A549 (cell line): ENCODE measurements at regions of chr9 and their contacts with region 1.

Region 1: DNA sequence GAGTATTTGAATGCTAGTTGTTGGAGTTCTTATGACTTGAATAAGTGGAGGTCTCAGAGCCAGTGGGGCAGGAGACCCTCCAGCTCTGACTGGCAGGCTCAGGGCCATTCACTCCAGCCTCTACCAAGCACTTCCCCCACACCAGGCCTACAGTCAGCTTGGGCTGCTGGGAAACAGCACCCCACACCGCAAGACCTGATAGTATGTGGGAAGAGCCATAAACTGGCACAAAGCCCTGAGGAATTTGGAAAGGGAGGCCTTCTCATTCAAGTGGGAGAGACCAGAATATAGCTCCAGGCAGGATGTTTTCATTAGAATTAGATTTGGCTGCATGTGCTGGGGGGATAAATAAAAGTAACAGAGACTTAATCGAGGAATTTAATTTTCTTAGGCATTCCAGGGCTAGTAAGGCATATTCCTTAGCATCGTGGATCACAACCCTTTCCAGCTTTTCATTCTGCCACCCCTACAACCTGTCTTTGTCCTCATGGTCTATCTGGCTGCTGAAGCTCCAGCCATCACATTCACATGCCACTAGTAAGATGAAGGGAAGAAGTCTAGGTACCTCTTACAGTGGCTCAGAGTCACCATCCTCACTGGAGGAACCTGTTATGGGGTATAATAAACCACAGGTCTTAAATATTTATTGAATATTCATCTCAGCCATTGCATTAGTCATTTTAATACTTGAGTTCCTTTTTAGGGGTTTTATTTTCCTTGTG is 47.5 kb downstream of the TMOD1 start:
- DNase-seq: no peak
- ATAC-seq: no peak
- H3K4me3 ChIP-seq: no peak overlapping the region
- H3K27ac ChIP-seq: no peak overlapping the region
- H3K4me1 ChIP-seq: no peaks in the 10 kb centered on the region
- CTCF ChIP-seq: no peak
- EP300 ChIP-seq: no peak
- POLR2A ChIP-seq: no peak
- RAD21 ChIP-seq: no peak

Region 2: DNA sequence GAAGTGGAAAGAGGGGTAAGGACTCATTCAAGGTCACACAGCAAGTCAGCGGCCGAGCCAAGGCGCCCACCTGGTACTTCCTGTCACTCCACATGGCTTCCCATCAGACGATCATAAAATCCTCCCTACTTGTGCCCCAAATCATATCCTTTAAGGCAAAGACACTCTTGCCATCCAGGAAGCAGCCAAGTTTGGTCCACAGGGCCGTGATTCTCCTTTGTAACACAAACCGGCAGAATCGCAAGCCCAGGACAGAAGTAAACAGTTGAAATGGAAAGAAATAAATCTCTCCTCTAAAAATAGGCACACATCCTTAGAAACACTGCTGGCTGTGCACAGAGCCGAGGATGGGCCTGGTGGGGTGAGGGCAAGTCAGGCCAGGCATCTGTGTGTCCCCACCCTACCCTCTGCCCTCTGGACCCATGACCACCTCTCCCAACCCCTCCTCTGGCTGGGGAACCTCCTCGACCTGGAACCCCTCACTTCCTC is 17.0 kb before region 1 on chr9:
- CTCF ChIA-PET with region 1: interaction called, 11 read pairs
- POLR2A ChIA-PET with region 1: no interaction called
- DNase-seq: no peak
- ATAC-seq: no peak
- H3K4me3 ChIP-seq: no peak overlapping the region
- H3K27ac ChIP-seq: no peak overlapping the region
- H3K4me1 ChIP-seq: peaks cover 7% of the 10 kb centered on the region; the same call in 1 of the 3 replicates
- CTCF ChIP-seq: no peak
- EP300 ChIP-seq: no peak
- POLR2A ChIP-seq: no peak
- RAD21 ChIP-seq: no peak